GM10248 (cell line): ENCODE measurements at regions of chr2 and their contacts with region 1.

Region 1: GRCh38 chr2:231900486-231900942 is 25.7 kb downstream of the NPPC start:
- DNase-seq: peak; percentile 82
- CTCF ChIP-seq: peak; percentile 93

Region 2: DNA sequence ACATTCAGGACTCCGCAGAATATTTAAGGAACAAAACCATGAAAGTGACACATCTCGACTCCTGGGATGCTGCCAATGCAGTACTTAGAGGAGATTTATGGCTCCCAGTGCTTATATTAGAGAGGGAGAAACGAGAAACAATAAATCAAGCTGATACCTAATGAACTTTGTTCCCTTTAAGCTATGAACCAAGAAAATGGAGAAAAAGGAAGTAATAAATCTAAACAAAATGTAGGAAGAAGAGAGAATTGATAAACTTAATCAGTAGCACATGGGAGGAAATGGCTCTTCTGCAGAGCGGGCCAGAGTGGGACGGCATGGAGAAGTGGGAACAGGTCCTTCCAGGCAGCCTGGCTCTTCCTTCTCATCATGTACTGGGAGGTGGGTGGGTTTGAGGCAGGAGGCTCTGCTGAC is 17.0 kb before region 1 on chr2:
- CTCF ChIA-PET with region 1: interaction called, 21 read pairs
- POLR2A ChIA-PET with region 1: no interaction called
- DNase-seq: no peak
- CTCF ChIP-seq: no peak

Region 3: GRCh38 chr2:231917280-231918066 is 17.0 kb after region 1 on chr2:
- CTCF ChIA-PET with region 1: interaction called, 38 read pairs
- POLR2A ChIA-PET with region 1: no interaction called
- DNase-seq: no peak
- CTCF ChIP-seq: no peak

Region 4: DNA sequence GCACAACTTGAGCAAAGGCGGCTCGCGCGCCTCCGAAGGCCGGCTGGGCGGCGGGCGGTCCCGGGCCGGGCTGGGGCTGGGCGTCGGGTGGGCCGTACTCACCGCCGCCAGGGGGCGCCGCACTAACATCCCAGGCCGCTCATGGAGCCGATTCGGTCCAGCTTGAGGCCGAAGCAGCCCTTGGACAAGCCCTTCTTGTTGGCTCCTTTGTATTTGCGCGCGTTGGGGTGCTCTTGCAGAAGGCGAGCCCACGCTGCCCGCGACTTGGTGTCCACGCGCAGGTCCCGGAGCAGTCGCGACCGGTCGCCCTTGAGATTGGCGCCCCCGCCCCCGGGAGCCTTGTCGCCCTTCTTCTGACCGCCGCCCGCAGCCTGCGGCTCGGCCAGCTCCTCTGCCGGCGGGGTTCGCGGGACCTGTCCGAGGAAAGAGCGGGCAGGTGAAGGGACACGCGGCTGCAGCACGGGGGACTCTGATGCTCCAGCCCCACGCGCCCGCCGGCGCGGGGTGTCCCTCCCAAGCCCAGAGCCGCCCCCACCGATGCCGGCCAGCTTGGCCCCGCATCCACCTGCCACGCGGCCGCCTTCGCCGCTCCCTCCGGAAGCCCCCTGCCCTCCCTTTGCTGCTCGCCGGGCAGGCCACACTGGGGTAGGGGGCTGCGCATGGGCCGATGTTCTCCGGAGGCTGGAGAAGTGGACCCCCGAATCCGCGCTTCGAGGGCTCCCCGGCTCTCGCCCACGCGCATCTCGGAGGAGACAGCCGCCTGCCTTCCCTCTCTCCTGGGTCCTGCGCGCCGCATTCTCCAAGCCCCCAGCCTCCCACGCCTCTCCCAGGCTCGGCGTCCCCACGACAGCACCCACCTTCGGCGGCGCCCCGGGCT is 25.0 kb after region 1 on chr2:
- CTCF ChIA-PET with region 1: interaction called, 38 read pairs
- POLR2A ChIA-PET with region 1: no interaction called
- DNase-seq: peak; percentile 88
- CTCF ChIP-seq: peak; percentile 70

Region 5: GRCh38 chr2:232142049-232142448 is 241.5 kb after region 1 on chr2:
- CTCF ChIA-PET with region 1: interaction called, 11 read pairs
- POLR2A ChIA-PET with region 1: no interaction called
- DNase-seq: no peak
- CTCF ChIP-seq: peak; percentile 70

Region 6: DNA sequence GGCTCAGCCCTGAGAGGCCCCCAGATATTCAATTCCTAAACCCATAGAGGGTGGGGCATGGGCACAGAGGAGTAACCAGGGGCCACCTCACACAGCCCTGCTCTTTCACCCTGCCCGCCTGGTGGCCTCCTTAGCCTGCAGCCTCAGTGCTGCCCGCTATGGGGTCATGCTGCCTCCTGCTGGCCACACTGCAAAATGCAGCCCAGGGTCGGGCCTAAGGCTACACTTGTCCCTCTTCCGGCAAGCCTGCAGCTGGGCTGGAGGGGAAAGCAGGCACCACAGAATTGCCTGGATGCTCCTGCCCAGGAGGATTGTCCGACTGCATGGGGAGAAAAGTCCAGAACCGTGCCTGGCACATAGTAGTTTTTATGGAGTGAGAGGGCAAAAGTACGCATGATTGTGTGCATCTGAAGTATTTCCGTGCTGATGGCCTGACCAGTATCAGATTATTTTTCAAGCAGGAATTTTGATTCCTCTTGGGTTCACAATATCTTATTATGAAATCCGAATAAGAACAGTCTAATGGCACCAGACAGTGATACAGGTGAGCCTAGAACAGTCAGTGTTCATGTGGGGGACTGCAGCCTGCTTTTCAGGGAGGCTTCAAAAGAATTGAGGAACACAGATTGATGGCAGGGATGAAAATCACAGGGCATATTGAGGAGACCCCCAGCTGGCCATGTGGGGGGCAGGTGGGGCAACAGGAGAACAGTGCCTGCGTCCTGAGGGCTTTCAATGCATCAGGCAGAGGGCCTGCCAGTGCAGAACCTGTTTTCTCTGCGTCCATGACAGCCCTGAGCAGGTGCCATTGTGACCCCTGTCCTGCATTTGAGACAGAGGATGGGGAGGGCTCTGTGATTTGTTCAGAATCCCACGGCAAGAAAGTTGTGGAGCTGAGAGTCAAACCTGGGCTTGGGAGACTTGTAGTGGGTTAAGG is 426.9 kb after region 1 on chr2:
- CTCF ChIA-PET with region 1: interaction called, 62 read pairs
- POLR2A ChIA-PET with region 1: no interaction called
- DNase-seq: peak; percentile 81
- CTCF ChIP-seq: peak; percentile 88